ENCODE measurements at regions of chr17 and their contacts with region 1.

Region 1: GRCh38 chr17:11644261-11645212 is 46.3 kb downstream of the DNAH9 start:
- DNase-seq: peak; percentile 36 to 82
- ATAC-seq: peak; percentile 85 to 89
- H3K4me3 ChIP-seq: no peak overlapping the region
- H3K27ac ChIP-seq: no peak overlapping the region
- H3K4me1 ChIP-seq: no peaks in the 10 kb centered on the region
- CTCF ChIP-seq: peak; percentile 83
- EP300 ChIP-seq: no peak
- POLR2A ChIP-seq: no peak
- RAD21 ChIP-seq: peak; percentile 58 to 71; a peak in 4 of 5 replicates

Region 2: GRCh38 chr17:11353601-11354000 is 290.9 kb before region 1 on chr17:
- CTCF ChIA-PET with region 1: no interaction called
- POLR2A ChIA-PET with region 1: no interaction called
- DNase-seq: no peak
- ATAC-seq: no peak
- H3K4me3 ChIP-seq: no peak overlapping the region
- H3K27ac ChIP-seq: no peak overlapping the region
- H3K4me1 ChIP-seq: no peaks in the 10 kb centered on the region
- CTCF ChIP-seq: no peak
- EP300 ChIP-seq: no peak
- POLR2A ChIP-seq: no peak
- RAD21 ChIP-seq: no peak

Region 3: GRCh38 chr17:11610999-11611566 is 33.5 kb before region 1 on chr17:
- CTCF ChIA-PET with region 1: interaction called, 15 read pairs
- POLR2A ChIA-PET with region 1: no interaction called
- DNase-seq: no peak
- ATAC-seq: no peak
- H3K4me3 ChIP-seq: no peak overlapping the region
- H3K27ac ChIP-seq: no peak overlapping the region
- H3K4me1 ChIP-seq: peaks cover 13% of the 10 kb centered on the region; the same call in 2 of the 3 replicates
- CTCF ChIP-seq: no peak
- EP300 ChIP-seq: no peak
- POLR2A ChIP-seq: no peak
- RAD21 ChIP-seq: no peak